H1 (cell line): ENCODE measurements at regions of chr6 and their contacts with region 1.

Region 1: GRCh38 chr6:110631574-110631973 is 155.2 kb upstream of the SLC22A16 start:
- DNase-seq: no peak
- H3K4me3 ChIP-seq: no peak overlapping the region
- H3K27ac ChIP-seq: no peak overlapping the region
- H3K4me1 ChIP-seq: no peaks in the 10 kb centered on the region; a peak in 1 of 7 replicates
- H3K27me3 ChIP-seq: no peaks in the 10 kb centered on the region
- CTCF ChIP-seq: no peak
- EP300 ChIP-seq: no peak
- POLR2A ChIP-seq: no peak
- RAD21 ChIP-seq: no peak

Region 2: DNA sequence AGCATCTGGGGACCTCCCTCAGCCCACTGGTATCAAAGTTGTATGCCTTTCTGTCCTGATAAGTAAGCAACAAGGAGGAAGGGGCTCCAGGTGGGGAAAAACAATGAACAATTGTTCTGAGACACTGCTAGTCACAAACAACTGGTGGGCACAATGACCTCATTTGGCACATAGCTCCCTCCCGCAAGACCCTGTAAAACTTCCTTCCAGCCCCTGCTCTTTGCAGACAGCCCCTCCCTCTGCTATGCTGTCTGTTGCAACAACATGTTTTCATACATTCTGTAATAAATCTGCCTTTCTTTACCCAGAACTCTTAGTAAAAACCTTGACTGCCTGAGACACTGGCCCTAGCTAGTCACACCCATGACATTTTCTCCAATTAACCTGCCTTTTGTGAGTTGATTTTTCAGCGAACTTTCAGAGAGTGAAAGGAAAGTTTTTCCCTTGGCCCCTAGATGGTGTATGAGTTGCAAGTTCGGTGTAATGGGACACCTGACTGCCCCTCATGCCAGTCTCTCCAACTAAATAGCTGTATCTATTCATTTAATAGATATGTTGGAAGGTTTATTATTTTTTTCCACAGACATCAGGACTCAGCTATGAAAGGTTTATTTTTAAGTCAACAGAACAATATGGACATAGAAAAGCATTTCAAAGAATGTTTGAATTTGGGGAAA is 12.8 kb before region 1 on chr6:
- CTCF ChIA-PET with region 1: interaction called, 11 read pairs
- POLR2A ChIA-PET with region 1: no interaction called
- DNase-seq: no peak
- H3K4me3 ChIP-seq: no peak overlapping the region
- H3K27ac ChIP-seq: no peak overlapping the region
- H3K4me1 ChIP-seq: peaks cover 0 to 4% (median 2%) of the 10 kb centered on the region in 4 experiments; a peak in 4 of 7 replicates
- H3K27me3 ChIP-seq: no peaks in the 10 kb centered on the region
- CTCF ChIP-seq: peak in 2 of 3 experiments; percentile 44 to 45; a peak in 3 of 4 replicates
- EP300 ChIP-seq: no peak
- POLR2A ChIP-seq: no peak
- RAD21 ChIP-seq: peak; percentile 68 to 70